Activated B cell treated with CpG ODN at 0.5 μM for 24 hours (primary cell): ENCODE measurements at regions of chr20 and their contacts with region 1.

Region 1: GRCh38 chr20:381581-382290 is 1.2 kb downstream of the TRIB3 start:
- DNase-seq: peak; percentile 64
- ATAC-seq: peak; percentile 79
- H3K4me3 Mint-ChIP-seq: peak overlapping the region; percentile 83
- H3K27ac Mint-ChIP-seq: peak overlapping the region; percentile 80
- H3K4me1 Mint-ChIP-seq: peaks cover 12% of the 10 kb centered on the region
- H3K27me3 Mint-ChIP-seq: no peaks in the 10 kb centered on the region
- CTCF ChIP-seq: no peak

Region 2: GRCh38 chr20:362271-363254 is 19.2 kb before region 1 on chr20:
- CTCF ChIA-PET with region 1: no interaction called
- POLR2A ChIA-PET with region 1: interaction called, 9 read pairs
- intact Hi-C with region 1: loop called (anchors 2 kb)
- DNase-seq: no peak
- ATAC-seq: peak; percentile 26
- H3K4me3 Mint-ChIP-seq: no peak overlapping the region
- H3K27ac Mint-ChIP-seq: peak overlapping the region; percentile 0
- H3K4me1 Mint-ChIP-seq: peaks cover 33% of the 10 kb centered on the region
- H3K27me3 Mint-ChIP-seq: no peaks in the 10 kb centered on the region
- CTCF ChIP-seq: no peak

Region 3: GRCh38 chr20:438571-439469 is 57.1 kb after region 1 on chr20:
- CTCF ChIA-PET with region 1: no interaction called
- POLR2A ChIA-PET with region 1: interaction called, 4 read pairs
- intact Hi-C with region 1: loop called (anchors 2 kb)
- DNase-seq: no peak
- ATAC-seq: peak; percentile 41
- H3K4me3 Mint-ChIP-seq: peak overlapping the region; percentile 67
- H3K27ac Mint-ChIP-seq: peak overlapping the region; percentile 82
- H3K4me1 Mint-ChIP-seq: peaks cover 49% of the 10 kb centered on the region
- H3K27me3 Mint-ChIP-seq: no peaks in the 10 kb centered on the region
- CTCF ChIP-seq: no peak

Region 4: GRCh38 chr20:462199-462991 is 80.7 kb after region 1 on chr20 and contains the start of gene TBC1D20:
- CTCF ChIA-PET with region 1: no interaction called
- POLR2A ChIA-PET with region 1: interaction called, 6 read pairs
- intact Hi-C with region 1: loop called (anchors 1 kb)
- DNase-seq: peak; percentile 91
- ATAC-seq: peak; percentile 96
- H3K4me3 Mint-ChIP-seq: peak within 1 kb of the TSS; percentile 93
- H3K27ac Mint-ChIP-seq: peak within 1 kb of the TSS; percentile 89
- H3K4me1 Mint-ChIP-seq: peaks cover 24% of the 10 kb centered on the region
- H3K27me3 Mint-ChIP-seq: peaks cover 2% of the 10 kb centered on the region
- CTCF ChIP-seq: no peak
- total RNA-seq, gene TBC1D20: 21.4 and 24.1 TPM in 2 replicates